ENCODE measurements at regions of chr1 and their contacts with region 1.

Region 1: DNA sequence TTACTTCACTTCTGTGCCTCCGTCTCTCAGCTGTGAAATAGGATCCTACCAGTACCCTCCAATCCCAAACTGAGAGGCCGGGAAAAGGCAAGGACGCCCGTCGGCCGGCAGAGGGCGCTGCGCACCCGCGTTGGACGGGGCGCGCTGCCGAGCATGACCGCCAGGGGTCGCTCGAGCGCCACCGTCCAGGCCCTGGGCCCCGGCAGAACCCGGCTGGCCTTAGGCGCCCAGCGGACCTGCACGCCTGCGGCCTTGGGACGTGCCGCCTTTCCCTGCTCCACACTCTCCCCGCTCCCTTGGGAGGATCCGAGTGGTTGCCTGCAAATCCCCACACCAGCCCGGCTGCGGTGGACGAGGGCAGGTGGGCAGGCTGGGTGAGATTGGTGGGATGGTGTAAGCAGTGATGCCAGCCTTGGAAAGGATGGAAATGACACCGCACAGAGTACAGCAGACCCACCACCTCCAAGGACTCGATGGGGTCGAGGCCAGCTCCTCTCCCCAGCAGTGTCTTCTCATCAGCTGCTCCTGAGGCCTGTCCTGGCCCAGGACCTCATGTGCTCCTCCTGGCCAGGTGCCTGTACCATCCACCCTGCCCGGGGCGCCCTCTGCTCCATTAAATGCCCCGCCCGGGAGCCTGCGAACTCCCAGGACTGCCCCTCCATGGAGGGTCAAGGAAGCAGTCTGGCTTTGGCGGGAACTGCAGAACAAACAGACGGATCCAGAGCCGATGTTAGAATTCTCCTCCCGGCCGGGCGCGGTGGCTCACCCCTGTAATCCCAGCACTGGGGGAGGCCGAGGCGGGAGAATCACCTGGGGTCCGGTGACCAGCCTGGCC is 47.4 kb upstream of the LBR start:
- DNase-seq: peak; percentile 70
- H3K4me3 ChIP-seq: no peak overlapping the region
- H3K27ac ChIP-seq: no peak overlapping the region
- H3K4me1 ChIP-seq: peaks cover 56% of the 10 kb centered on the region
- CTCF ChIP-seq: peak; percentile 100

Region 2: DNA sequence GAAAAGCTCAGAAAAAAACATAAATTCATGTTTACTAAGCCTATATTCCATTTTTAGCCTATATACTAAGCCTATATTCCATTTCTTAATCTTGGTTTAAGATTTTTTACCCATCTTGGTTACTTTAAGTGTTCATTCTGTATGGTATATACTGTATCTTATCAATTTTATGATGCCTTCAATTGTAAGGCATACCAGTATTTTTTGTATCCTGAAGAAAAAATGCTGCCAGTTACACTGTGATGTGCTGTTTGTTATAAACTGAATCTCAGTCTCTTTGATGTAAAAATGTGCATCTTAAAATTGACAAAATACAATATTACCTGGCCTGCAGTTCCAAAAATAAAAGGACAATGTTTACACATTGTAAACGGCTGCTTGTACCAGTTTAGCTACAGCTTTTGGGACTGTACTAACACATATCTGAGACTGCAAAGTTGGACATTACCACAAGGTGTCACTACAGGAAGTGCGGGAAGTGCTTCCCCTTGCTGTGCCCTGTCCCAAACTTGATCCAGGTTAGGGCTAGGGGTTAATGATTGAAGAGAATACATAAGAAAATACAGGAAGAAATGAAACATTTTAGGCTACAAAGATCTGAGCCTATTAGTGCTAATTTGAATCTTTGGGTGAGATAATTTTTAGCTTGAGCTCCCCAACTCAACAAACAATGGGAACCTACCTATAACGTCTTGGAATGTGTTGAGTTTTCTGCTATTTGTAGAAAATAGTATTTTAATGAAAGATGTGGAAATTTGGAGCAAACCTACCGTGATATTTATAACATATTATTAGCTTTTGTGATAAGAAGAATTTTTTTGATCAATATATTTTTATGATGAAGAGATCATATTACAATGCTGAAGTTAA is 156.3 kb before region 1 on chr1:
- CTCF ChIA-PET with region 1: no interaction called
- POLR2A ChIA-PET with region 1: no interaction called
- intact Hi-C with region 1: loop called (anchors 1 kb)
- DNase-seq: peak; percentile 66
- H3K4me3 ChIP-seq: no peak overlapping the region
- H3K27ac ChIP-seq: no peak overlapping the region
- H3K4me1 ChIP-seq: no peaks in the 10 kb centered on the region
- CTCF ChIP-seq: peak; percentile 94

Region 3: DNA sequence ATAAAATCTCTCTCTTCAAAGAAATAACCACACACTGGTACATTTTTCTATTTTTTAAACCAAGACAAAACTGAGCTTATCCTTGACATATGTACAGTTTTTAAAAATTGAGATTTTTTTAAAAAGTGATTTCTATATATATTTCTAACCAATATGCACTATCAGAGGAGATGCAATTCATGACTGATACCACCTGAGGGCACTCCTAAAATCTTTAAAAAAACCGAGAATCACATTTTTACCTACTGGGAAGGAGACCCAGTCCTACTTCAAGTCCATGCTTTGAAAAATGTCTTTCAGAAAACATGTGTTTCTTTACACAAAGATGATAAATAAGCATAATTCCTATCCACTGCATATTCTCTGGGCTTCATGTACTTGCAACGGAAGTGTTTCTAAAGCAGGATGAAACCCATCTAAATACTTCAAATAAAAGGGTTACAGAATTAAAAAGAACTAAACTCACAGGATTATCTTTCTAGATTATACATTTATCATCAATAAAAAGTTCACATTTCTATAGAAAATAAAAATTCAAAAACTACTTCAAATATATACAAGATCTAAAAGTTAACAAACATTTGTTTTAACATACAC is 79.1 kb after region 1 on chr1:
- CTCF ChIA-PET with region 1: no interaction called
- POLR2A ChIA-PET with region 1: interaction called, 5 read pairs
- intact Hi-C with region 1: loop called (anchors 1 kb)
- DNase-seq: peak; percentile 56
- H3K4me3 ChIP-seq: no peak overlapping the region
- H3K27ac ChIP-seq: no peak overlapping the region
- H3K4me1 ChIP-seq: no peaks in the 10 kb centered on the region
- CTCF ChIP-seq: peak; percentile 94

Region 4: DNA sequence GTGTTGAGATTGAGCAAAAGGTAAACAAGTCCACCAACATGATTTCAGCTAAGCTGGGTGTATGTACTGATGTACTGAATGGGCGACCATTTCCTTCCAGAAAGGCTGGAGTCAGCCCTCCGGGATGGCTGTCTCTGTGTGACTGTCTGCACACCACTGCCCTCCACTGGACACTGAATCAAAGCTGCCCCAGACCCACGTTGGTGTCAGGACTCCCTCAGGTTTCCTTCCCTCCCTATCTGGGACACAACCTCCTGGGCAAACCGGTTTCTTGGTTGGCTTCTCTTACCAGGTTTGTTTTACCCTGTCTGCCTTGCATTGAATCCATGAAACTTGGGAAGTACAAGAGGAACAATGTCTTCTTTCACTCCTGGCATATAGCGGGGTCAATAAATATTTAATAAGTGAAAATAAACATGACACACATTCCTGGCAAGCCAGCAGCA is 297.1 kb after region 1 on chr1:
- CTCF ChIA-PET with region 1: interaction called, 7 read pairs
- POLR2A ChIA-PET with region 1: interaction called, 7 read pairs
- intact Hi-C with region 1: loop called (anchors 1 kb)
- DNase-seq: peak; percentile 75
- H3K4me3 ChIP-seq: no peak overlapping the region
- H3K27ac ChIP-seq: no peak overlapping the region
- H3K4me1 ChIP-seq: peaks cover 52% of the 10 kb centered on the region
- CTCF ChIP-seq: peak; percentile 88

Measured in OCI-LY7 (cell line).